ENCODE measurements at regions of chr6 and their contacts with region 1.

Region 1: DNA sequence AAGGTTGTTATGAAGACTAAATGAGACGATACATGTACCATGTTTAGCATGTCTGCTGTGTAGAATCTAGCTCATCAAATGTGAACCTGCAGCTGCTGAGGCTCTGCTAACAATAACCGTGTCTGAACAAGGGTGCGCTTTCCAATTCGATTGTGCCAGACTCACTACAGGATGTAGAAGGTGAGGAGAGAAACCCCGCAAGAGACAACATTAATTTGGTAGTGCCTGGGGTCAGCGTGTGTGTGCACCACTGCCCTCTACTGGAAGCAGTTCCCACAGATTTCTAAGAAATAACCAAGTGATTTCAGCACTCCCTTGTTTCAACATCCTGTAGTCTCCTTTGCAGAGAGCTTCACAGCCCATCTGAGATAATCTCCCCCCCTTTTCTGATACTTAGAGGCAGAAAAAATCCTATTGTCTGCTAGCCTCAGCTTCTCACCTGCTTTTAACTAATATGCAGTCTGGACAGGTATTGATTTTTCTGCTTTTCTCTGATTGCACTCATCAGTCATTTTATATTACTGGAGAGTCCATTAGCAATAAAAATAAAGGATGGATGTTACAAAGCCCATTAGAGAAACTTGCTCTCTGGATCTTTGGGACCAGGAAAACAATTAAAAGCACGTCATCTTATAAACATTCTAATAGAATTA is 96.7 kb upstream of the BACH2 start:
- DNase-seq: peak; percentile 71
- H3K4me3 Mint-ChIP-seq: no peak overlapping the region
- H3K27ac Mint-ChIP-seq: peak overlapping the region; percentile 64
- H3K4me1 Mint-ChIP-seq: peaks cover 74% of the 10 kb centered on the region
- H3K27me3 Mint-ChIP-seq: no peaks in the 10 kb centered on the region

Region 2: DNA sequence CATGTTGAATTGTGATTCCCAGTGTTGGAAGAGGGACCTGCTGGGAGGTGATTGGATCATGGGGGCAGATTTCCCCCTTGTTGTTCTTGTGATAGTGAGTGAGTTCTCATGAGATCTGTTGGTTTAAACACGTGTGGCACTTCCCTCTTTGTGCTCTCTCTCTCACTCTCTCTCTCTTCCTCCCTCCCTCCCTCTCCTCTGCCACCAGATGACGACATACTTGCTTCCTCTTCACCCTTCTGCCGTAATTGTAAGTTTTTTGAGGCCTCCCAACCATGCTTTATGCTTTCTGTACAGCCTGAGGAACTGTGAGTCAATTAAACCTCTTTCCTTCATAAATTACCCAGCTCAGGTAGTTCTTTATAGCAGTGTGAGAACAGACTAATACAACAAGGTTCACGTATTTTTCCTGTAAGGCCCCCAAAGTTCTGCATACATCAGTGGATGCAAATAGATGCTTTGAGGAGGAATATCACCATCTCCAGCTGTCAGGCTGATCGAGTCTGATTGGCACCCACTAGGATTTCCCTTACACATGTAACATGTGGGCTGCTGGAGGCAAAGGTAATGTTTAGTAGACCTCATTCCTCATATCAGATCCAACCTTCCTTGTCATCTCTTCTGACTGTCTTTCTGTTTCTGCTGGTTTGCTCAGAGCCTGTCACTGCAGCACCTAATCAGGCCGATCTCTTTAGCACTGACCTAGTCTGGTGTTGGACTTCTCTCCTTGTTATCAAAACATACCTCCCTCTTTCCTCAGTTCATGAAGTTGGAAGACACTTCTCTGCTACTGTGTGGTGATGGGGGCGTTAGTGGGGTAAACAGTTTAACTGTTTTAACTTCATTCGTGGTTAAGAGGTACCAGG is 42.4 kb before region 1 on chr6:
- intact Hi-C with region 1: loop called (anchors 1 kb)
- DNase-seq: peak; percentile 35
- H3K4me3 Mint-ChIP-seq: no peak overlapping the region
- H3K27ac Mint-ChIP-seq: peak overlapping the region; percentile 89
- H3K4me1 Mint-ChIP-seq: peaks cover 47% of the 10 kb centered on the region
- H3K27me3 Mint-ChIP-seq: no peaks in the 10 kb centered on the region

Region 3: GRCh38 chr6:90411292-90411781 is 18.0 kb after region 1 on chr6:
- intact Hi-C with region 1: loop called (anchors 1 kb)
- DNase-seq: peak; percentile 62
- H3K4me3 Mint-ChIP-seq: no peak overlapping the region
- H3K27ac Mint-ChIP-seq: peak overlapping the region; percentile 81
- H3K4me1 Mint-ChIP-seq: peaks cover 81% of the 10 kb centered on the region
- H3K27me3 Mint-ChIP-seq: no peaks in the 10 kb centered on the region

Region 4: GRCh38 chr6:90445533-90446108 is 52.3 kb after region 1 on chr6:
- intact Hi-C with region 1: loop called (anchors 1 kb)
- DNase-seq: no peak
- H3K4me3 Mint-ChIP-seq: no peak overlapping the region
- H3K27ac Mint-ChIP-seq: peak overlapping the region; percentile 97
- H3K4me1 Mint-ChIP-seq: peaks cover 56% of the 10 kb centered on the region
- H3K27me3 Mint-ChIP-seq: no peaks in the 10 kb centered on the region

Region 5: DNA sequence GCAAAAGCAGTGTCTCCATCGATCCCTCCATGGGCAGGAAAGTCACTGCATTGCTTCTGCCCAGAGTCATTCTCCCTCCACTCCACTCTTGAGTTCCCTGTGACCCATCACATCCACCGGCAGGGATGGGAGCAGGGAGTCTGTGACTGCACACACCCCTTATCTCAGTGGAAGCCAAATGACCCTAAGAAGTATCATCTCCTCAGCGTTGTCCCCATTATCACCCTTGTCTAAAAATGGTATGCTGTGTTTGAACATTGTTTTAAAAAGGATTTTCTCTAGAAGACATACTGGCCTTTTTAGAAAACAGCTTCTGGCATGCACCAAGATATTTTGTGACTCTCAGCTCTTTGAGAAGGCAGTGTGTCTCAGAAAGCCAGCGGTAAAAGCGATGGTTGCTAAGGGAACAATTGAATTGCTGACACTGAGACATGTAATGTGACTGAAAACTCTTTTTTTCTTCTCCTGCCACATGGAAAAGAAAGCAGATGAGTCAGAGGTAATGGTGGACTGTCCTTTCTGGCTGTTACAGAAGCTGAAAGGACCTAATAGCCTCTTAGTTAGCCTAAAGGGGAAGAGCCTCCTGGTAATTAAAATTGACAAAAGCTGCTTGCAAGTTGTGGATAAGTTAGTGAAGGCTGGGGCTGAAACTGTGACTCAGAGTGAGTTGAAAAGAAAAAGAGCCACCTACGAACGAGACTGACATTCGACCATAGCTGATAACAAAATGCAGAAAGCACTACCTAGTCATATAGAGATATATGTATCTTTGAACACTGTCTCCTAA is 73.0 kb after region 1 on chr6:
- intact Hi-C with region 1: loop called (anchors 2 kb)
- DNase-seq: no peak
- H3K4me3 Mint-ChIP-seq: peak overlapping the region; percentile 37
- H3K27ac Mint-ChIP-seq: peak overlapping the region; percentile 94
- H3K4me1 Mint-ChIP-seq: peaks cover 93% of the 10 kb centered on the region
- H3K27me3 Mint-ChIP-seq: no peaks in the 10 kb centered on the region